Natural killer cell (primary cell): ENCODE measurements at regions of chr16 and their contacts with region 1.

Region 1: GRCh38 chr16:68040507-68041288 is 17.6 kb downstream of the DUS2 start:
- DNase-seq: peak; percentile 89 to 93
- ATAC-seq: peak; percentile 98 to 100 (median 99)
- H3K4me3 ChIP-seq: no peak overlapping the region
- H3K4me3 Mint-ChIP-seq: no peak overlapping the region
- H3K27ac ChIP-seq: no peak overlapping the region
- H3K27ac Mint-ChIP-seq: peak overlapping the region; percentile 72 to 79
- H3K4me1 ChIP-seq: peaks cover 35% of the 10 kb centered on the region
- H3K4me1 Mint-ChIP-seq: peaks cover 16 to 19% of the 10 kb centered on the region in 2 donors
- H3K27me3 ChIP-seq: no peaks in the 10 kb centered on the region
- H3K27me3 Mint-ChIP-seq: no peaks in the 10 kb centered on the region
- CTCF ChIP-seq: peak; percentile 83

Region 2: GRCh38 chr16:67816240-67817031 is 224.3 kb before region 1 on chr16:
- intact Hi-C with region 1: loop called (anchors 1 kb)
- DNase-seq: peak; percentile 91 to 94
- ATAC-seq: peak; percentile 99
- H3K4me3 ChIP-seq: no peak overlapping the region
- H3K4me3 Mint-ChIP-seq: no peak overlapping the region
- H3K27ac ChIP-seq: no peak overlapping the region
- H3K27ac Mint-ChIP-seq: peak overlapping the region; percentile 31 to 45
- H3K4me1 ChIP-seq: peaks cover 8% of the 10 kb centered on the region
- H3K4me1 Mint-ChIP-seq: peaks cover 0 to 7% of the 10 kb centered on the region in 2 donors
- H3K27me3 ChIP-seq: no peaks in the 10 kb centered on the region
- H3K27me3 Mint-ChIP-seq: no peaks in the 10 kb centered on the region
- CTCF ChIP-seq: peak; percentile 100

Region 3: GRCh38 chr16:67883872-67884261 is 156.8 kb before region 1 on chr16:
- intact Hi-C with region 1: loop called (anchors 1 kb)
- DNase-seq: peak; percentile 72 to 85
- ATAC-seq: peak; percentile 59 to 90 (median 87)
- H3K4me3 ChIP-seq: no peak overlapping the region
- H3K4me3 Mint-ChIP-seq: no peak overlapping the region
- H3K27ac ChIP-seq: no peak overlapping the region
- H3K27ac Mint-ChIP-seq: peak overlapping the region in 1 of 2 donors; percentile 58
- H3K4me1 ChIP-seq: no peaks in the 10 kb centered on the region
- H3K4me1 Mint-ChIP-seq: peaks cover 0 to 4% of the 10 kb centered on the region in 2 donors
- H3K27me3 ChIP-seq: no peaks in the 10 kb centered on the region
- H3K27me3 Mint-ChIP-seq: no peaks in the 10 kb centered on the region
- CTCF ChIP-seq: peak; percentile 81

Region 4: DNA sequence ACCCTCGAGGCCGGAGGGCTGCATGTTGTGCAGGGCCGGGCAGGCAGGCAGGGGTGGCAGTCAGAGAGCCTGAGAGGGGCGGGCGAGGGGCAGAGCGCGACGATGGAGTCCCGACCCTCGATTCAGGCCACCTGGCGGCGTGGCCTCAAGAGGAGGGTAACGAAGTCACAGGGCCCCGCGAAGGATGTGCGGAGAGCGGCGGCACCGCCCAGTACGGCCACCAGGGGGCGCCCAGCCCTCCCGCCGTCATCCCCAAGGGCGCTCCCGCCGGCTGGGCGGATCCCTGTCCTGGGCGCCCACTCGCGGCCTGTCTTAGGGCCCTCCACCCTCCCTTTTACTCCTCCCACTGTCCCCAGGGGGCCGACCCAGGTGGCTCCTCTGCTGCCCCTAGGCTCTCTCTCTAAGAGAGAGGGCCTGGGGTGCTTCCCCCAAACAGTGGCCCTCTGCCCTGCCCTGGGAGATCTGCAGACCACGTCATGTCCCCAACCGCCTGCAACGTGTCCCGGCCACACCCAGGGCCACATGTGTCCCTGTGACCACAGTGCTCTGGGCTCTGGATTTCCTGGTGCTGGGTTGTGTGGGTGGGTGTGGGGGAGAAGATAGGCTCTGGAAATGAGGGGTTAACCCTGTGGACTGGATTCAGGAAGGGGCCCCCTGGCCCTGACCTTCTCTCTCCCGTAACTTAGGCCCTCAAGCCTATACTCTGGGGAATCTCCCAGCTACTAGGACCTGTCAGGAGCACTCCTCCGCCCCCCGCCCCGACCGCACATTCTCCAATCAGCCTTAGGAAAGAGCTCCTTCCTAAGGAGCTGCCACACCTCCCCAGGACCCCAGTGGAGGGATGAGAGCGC is 47.3 kb before region 1 on chr16:
- intact Hi-C with region 1: loop called (anchors 1 kb)
- DNase-seq: peak; percentile 85 to 91
- ATAC-seq: peak; percentile 88 to 95 (median 90)
- H3K4me3 ChIP-seq: peak overlapping the region; percentile 32
- H3K4me3 Mint-ChIP-seq: peak overlapping the region; percentile 83
- H3K27ac ChIP-seq: peak overlapping the region; percentile 89
- H3K27ac Mint-ChIP-seq: peak overlapping the region; percentile 89 to 95
- H3K4me1 ChIP-seq: peaks cover 75% of the 10 kb centered on the region
- H3K4me1 Mint-ChIP-seq: peaks cover 24 to 53% of the 10 kb centered on the region in 2 donors
- H3K27me3 ChIP-seq: no peaks in the 10 kb centered on the region
- H3K27me3 Mint-ChIP-seq: no peaks in the 10 kb centered on the region
- CTCF ChIP-seq: peak; percentile 92

Region 5: GRCh38 chr16:68367030-68367429 is 326.3 kb after region 1 on chr16:
- intact Hi-C with region 1: no loop called
- DNase-seq: peak in 1 of 2 donors; percentile 70
- ATAC-seq: peak in 2 of 3 donors; percentile 30 to 35
- H3K4me3 ChIP-seq: no peak overlapping the region
- H3K4me3 Mint-ChIP-seq: no peak overlapping the region
- H3K27ac ChIP-seq: no peak overlapping the region
- H3K27ac Mint-ChIP-seq: no peak overlapping the region
- H3K4me1 ChIP-seq: peaks cover 67% of the 10 kb centered on the region
- H3K4me1 Mint-ChIP-seq: peaks cover 33 to 54% of the 10 kb centered on the region in 2 donors
- H3K27me3 ChIP-seq: peaks cover 3% of the 10 kb centered on the region
- H3K27me3 Mint-ChIP-seq: peaks cover 0 to 7% of the 10 kb centered on the region in 2 donors
- CTCF ChIP-seq: peak; percentile 54